Sigmoid colon (tissue), 7 donors: ENCODE measurements at regions of chr3 and their contacts with region 1.

Region 1: GRCh38 chr3:120417272-120417911 is 33.4 kb downstream of the FSTL1 start:
- DNase-seq: peak; percentile 96
- H3K4me3 ChIP-seq: peak overlapping the region in 3 of 4 donors; percentile 8 to 33 (median 29)
- H3K27ac ChIP-seq: peak overlapping the region; percentile 79 to 96 (median 85)
- H3K4me1 ChIP-seq: peaks cover 0 to 70% (median 65%) of the 10 kb centered on the region in 4 donors
- H3K27me3 ChIP-seq: no peaks in the 10 kb centered on the region
- CTCF ChIP-seq: peak; percentile 78 to 93 (median 86)
- EP300 ChIP-seq: no peak
- POLR2A ChIP-seq: no peak

Region 2: GRCh38 chr3:119891944-119892721 is 525.3 kb before region 1 on chr3:
- intact Hi-C with region 1: loop called (anchors 2 kb)
- DNase-seq: no peak
- H3K4me3 ChIP-seq: peak overlapping the region in 2 of 4 donors; percentile 10 to 18
- H3K27ac ChIP-seq: peak overlapping the region in 3 of 4 donors; percentile 34 to 55 (median 36)
- H3K4me1 ChIP-seq: peaks cover 0 to 11% (median 0%) of the 10 kb centered on the region in 4 donors
- H3K27me3 ChIP-seq: no peaks in the 10 kb centered on the region
- CTCF ChIP-seq: peak; percentile 58 to 69 (median 58)
- EP300 ChIP-seq: no peak
- POLR2A ChIP-seq: no peak

Region 3: DNA sequence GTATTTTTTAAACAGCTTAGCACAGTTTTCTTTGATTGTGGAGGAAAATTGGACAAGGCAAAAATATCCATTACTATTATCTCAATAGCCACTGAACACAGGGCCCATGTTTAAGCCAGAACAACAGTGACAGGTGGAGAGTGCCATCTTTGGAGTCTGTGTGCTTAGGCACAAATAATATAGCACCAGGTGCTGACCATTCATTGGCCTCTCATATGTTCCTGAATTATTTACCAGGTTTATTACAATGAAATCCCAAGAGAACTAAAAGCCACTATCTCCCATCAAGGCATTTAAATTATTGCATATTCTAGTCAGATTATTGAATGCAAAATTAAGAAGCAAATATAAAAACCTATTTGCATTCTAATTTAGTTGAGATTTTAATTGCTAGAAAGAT is 172.0 kb before region 1 on chr3:
- intact Hi-C with region 1: loop called (anchors 1 kb)
- DNase-seq: no peak
- H3K4me3 ChIP-seq: no peak overlapping the region
- H3K27ac ChIP-seq: no peak overlapping the region
- H3K4me1 ChIP-seq: peaks cover 0 to 5% (median 2%) of the 10 kb centered on the region in 4 donors
- H3K27me3 ChIP-seq: no peaks in the 10 kb centered on the region
- CTCF ChIP-seq: no peak
- EP300 ChIP-seq: no peak
- POLR2A ChIP-seq: no peak

Region 4: DNA sequence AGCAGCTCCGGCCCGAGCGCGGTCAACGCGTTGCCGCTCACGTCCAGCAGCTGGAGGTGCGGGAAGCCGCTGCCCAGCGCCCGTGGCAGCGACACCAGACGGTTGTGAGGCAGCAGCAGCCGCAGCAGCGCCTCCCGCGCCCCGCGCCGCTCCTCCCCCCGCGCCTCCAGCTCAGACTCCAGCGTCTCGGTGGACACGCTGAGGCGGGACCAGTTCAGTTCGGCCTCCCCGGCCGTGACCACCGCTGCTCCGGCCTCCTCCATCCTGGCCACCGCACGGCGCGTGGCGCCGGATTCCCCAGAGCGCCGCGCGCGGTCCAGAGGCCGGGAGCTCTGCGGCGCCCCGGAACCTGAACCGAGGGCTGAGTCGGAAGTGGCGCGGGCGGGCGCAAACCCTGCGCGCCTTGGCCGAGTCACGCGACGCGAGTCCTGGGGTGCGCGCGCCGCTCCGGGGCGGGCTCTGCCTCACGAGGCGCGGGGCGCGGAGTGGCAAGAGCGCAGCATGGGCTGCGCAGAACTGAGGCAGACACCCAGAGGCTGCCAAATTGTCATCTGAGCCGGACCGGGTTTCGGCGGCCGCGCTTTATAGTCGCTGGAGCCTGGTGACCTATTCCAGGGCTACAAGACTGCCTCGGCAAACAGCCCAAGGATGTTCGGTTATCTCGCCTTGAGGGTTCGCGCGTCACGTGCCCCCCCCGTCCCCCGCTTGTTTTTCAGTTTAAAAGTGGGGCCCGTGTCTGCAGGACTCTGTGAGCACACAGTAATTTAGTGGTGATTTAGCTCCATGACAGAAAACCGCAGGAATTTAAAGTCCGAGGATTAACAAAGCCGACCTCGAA is 68.2 kb before region 1 on chr3 and contains the start of gene LRRC58:
- intact Hi-C with region 1: loop called (anchors 2 kb)
- DNase-seq: peak; percentile 95
- H3K4me3 ChIP-seq: peak within 1 kb of the TSS; percentile 62 to 92 (median 84)
- H3K27ac ChIP-seq: peak within 1 kb of the TSS; percentile 84 to 96 (median 94)
- H3K4me1 ChIP-seq: peaks cover 0 to 40% (median 30%) of the 10 kb centered on the region in 4 donors
- H3K27me3 ChIP-seq: no peaks in the 10 kb centered on the region
- CTCF ChIP-seq: peak in 2 of 4 experiments; percentile 23 to 29
- EP300 ChIP-seq: peak in 1 of 4 donors; percentile 44
- POLR2A ChIP-seq: peak; percentile 82 to 83
- total RNA-seq, gene LRRC58: 34.5 to 48.5 (median 43.4) TPM

Region 5: GRCh38 chr3:120450600-120451271 is 33.3 kb after region 1 on chr3 and contains the start of gene FSTL1:
- intact Hi-C with region 1: loop called (anchors 2 kb)
- DNase-seq: peak; percentile 91
- H3K4me3 ChIP-seq: peak within 1 kb of the TSS; percentile 85 to 94 (median 89)
- H3K27ac ChIP-seq: peak within 1 kb of the TSS; percentile 96 to 98 (median 98)
- H3K4me1 ChIP-seq: peaks cover 0 to 51% (median 46%) of the 10 kb centered on the region in 4 donors
- H3K27me3 ChIP-seq: no peaks in the 10 kb centered on the region
- CTCF ChIP-seq: no peak
- EP300 ChIP-seq: no peak
- POLR2A ChIP-seq: peak; percentile 31 to 84
- total RNA-seq, gene FSTL1: 266 to 653 (median 320) TPM

Region 6: GRCh38 chr3:120506828-120507774 is 89.7 kb after region 1 on chr3:
- intact Hi-C with region 1: loop called (anchors 5 kb)
- DNase-seq: peak; percentile 68
- H3K4me3 ChIP-seq: no peak overlapping the region
- H3K27ac ChIP-seq: peak overlapping the region in 2 of 4 donors; percentile 1 to 48
- H3K4me1 ChIP-seq: peaks cover 0 to 27% (median 19%) of the 10 kb centered on the region in 4 donors
- H3K27me3 ChIP-seq: no peaks in the 10 kb centered on the region
- CTCF ChIP-seq: peak; percentile 15 to 70 (median 58)
- EP300 ChIP-seq: no peak
- POLR2A ChIP-seq: no peak

Region 7: GRCh38 chr3:120742198-120742849 is 324.9 kb after region 1 on chr3 and contains the starts of genes GTF2E1 and RABL3:
- intact Hi-C with region 1: loop called (anchors 5 kb)
- DNase-seq: peak; percentile 98
- H3K4me3 ChIP-seq: peak within 1 kb of the TSS; percentile 79 to 94 (median 87)
- H3K27ac ChIP-seq: peak within 1 kb of the TSS; percentile 89 to 93 (median 92)
- H3K4me1 ChIP-seq: peaks cover 0 to 19% (median 10%) of the 10 kb centered on the region in 4 donors
- H3K27me3 ChIP-seq: no peaks in the 10 kb centered on the region
- CTCF ChIP-seq: no peak
- EP300 ChIP-seq: peak in 1 of 4 donors; percentile 27
- POLR2A ChIP-seq: peak; percentile 45 to 49
- total RNA-seq, gene GTF2E1: 6.9 to 12.5 (median 10.3) TPM
- total RNA-seq, gene RABL3: 9.4 to 13.2 (median 12.6) TPM

Region 8: GRCh38 chr3:121462565-121462964 is 1045.2 kb after region 1 on chr3:
- intact Hi-C with region 1: no loop called
- DNase-seq: no peak
- H3K4me3 ChIP-seq: no peak overlapping the region
- H3K27ac ChIP-seq: no peak overlapping the region
- H3K4me1 ChIP-seq: no peaks in the 10 kb centered on the region
- H3K27me3 ChIP-seq: no peaks in the 10 kb centered on the region
- CTCF ChIP-seq: no peak
- EP300 ChIP-seq: no peak
- POLR2A ChIP-seq: no peak